Left ventricle myocardium inferior (tissue), 1 donor: ENCODE measurements at regions of chr6 and their contacts with region 1.

Region 1: DNA sequence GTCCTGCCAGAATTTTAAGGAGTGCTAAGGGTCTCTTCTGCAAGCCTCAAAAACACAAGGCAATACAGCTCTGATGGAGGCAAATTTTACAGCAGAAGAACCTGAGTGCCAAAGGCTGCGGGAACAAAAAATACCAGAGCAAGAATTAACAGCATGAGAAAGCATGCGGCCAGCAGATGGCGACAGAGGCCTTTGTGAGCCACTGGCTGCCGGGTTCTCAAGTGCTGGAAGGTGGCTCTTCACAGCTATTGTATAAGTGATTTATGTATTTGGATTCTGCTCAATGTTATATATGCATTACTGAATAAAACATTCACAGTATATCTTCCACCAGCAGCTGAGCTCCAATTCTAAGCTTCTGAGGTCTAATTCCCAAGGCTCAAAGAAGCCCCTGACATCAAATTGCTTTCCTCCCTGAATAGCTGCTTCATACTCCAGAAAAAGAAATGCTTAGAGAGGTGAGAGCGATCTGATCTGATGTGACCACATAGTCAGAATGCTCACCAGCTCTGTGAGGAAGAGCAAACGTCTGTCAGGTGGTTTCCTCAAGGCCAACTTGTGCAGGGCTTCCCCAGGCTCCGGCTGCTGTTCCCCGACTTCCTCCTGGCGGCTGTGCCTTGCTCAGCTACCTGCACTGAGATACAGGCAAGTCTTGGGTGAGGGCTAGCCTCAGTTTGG is 58.6 kb downstream of the PPP1R3G start:
- DNase-seq: peak; percentile 88
- H3K4me3 ChIP-seq: no peak overlapping the region
- H3K27ac ChIP-seq: no peak overlapping the region
- H3K4me1 ChIP-seq: peaks cover 4% of the 10 kb centered on the region
- H3K27me3 ChIP-seq: no peaks in the 10 kb centered on the region
- CTCF ChIP-seq: peak; percentile 94

Region 2: GRCh38 chr6:4901386-4902061 is 242.2 kb before region 1 on chr6:
- intact Hi-C with region 1: no loop called
- DNase-seq: no peak
- H3K4me3 ChIP-seq: no peak overlapping the region
- H3K27ac ChIP-seq: no peak overlapping the region
- H3K4me1 ChIP-seq: peaks cover 8% of the 10 kb centered on the region
- H3K27me3 ChIP-seq: no peaks in the 10 kb centered on the region
- CTCF ChIP-seq: no peak

Region 3: DNA sequence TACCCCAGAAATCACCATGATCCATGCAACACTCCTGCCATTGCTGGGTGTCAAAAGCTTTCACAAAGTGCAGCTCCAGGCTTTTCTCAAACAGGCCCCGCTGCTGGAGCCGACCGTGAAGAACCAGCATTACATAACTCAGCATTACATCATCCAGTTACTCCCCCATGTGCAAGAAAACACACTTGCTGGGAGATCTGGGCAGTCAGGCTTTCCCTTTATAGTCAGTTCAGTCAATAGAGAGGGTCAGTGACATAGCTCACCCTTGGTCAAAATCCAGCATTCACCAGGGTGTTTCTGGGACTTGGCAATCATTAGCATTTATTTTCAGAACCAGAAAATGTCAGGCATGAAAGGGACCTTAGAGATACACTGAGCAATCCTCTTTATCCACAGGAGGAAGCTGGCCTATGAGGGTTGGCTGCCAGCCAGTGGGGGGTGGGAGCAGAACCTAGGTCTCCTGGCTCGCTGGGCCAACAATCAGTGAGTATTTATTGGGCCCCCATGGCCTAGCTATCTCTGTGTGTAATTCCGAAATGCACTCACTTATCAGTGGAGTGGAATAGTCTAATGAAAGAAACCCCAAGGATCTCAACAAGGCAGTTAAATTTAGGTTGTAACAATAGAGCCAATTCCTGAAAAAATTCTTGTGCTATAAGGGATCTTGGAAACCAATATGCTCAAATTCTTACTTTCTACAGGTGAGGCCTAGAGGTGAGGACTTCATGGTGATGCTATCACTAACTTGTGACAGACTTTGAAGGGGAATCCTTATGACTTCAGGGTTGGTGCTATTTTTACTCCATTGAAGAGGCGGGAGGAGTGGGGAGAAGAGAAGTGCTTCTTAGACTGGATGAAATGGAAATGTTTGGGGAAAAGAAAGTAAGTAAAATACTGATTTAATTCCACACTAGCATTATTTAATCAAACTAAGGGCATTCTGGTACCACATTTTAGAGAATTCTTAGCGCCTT is 62.4 kb after region 1 on chr6:
- intact Hi-C with region 1: loop called (anchors 10 kb)
- DNase-seq: peak; percentile 67
- H3K4me3 ChIP-seq: peak overlapping the region; percentile 7
- H3K27ac ChIP-seq: peak overlapping the region; percentile 85
- H3K4me1 ChIP-seq: peaks cover 72% of the 10 kb centered on the region
- H3K27me3 ChIP-seq: no peaks in the 10 kb centered on the region
- CTCF ChIP-seq: no peak

Region 4: GRCh38 chr6:5343998-5344397 is 200.2 kb after region 1 on chr6:
- intact Hi-C with region 1: no loop called
- DNase-seq: no peak
- H3K4me3 ChIP-seq: no peak overlapping the region
- H3K27ac ChIP-seq: no peak overlapping the region
- H3K4me1 ChIP-seq: peaks cover 18% of the 10 kb centered on the region
- H3K27me3 ChIP-seq: no peaks in the 10 kb centered on the region
- CTCF ChIP-seq: no peak

Region 5: DNA sequence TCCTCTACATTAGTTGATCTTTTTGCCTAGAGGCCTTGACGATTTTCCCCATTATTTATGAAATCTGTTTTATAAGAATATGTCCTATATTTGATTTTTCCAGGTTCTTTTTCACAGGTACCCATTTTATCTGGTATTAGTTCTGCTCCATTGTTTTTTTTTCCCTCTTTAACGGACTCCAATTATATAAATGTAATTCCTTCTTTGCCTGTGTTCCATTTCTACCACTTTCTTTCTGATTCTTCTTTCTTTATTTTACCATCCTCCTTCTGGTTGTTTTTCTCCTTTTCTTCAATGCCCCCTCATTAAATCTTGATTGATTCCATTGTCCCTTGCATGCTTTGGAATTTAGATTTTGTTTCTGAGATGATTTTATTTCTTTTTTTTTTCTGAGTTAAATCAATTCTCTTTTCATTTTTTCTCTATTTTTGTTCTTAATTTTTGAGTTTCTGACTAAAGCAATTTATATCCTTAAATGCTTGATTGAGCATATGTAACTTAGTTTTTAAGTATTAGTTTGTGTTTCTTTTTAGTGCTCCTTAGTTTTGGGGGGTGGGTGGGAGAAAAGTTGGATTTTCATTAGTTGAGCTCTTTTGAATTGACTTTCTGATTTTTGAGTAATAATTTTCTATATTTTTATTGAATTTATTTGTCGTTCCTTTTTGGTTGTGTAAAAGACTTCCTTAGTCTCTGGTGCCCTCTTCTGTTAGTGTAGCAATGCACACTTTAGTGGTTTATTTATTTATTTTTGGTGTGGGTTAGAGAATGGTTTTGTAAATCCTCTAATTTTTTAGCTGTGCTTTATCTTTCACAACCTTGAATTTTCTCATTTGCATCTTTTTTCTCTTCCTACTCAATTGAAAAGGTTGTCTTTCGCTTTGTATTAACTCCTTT is 258.3 kb after region 1 on chr6:
- intact Hi-C with region 1: loop called (anchors 5 kb)
- DNase-seq: no peak
- H3K4me3 ChIP-seq: no peak overlapping the region
- H3K27ac ChIP-seq: no peak overlapping the region
- H3K4me1 ChIP-seq: peaks cover 10% of the 10 kb centered on the region
- H3K27me3 ChIP-seq: no peaks in the 10 kb centered on the region
- CTCF ChIP-seq: peak; percentile 66

Region 6: DNA sequence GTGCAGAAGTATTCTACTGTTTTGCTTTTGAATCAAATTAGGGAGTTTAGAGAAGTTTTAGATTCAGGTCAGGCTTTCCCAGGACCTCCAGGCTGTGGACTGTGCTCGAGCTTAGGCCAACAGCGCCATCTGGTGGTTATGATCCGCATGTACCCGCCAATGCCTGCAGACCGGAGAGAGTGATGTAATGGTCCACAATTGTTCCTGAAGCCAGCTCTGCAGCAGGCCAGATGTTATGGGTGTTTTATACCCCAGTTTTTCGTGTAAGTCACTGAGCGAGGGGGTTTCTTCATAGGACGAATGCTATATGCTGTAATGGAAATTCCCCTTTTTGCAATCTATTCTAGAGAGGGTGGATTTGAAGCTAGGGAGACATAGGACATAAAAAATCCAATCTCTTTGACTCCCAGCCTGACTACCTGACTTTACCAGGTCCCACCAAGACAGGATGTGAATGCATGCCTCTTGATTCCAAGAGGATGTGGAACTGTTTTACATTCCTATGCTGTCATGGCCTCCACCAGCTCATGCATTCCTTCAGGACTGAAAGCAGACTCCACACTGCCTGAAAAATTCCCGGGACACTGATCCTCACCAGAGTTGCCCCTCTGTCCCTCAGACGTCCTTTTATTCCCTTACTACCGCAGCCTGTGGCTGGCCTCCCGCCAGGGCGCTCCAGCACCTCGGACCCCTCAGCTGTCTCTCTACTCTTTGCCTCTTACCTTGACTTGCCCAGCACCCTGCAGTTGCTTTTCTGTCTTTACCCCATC is 1403.5 kb after region 1 on chr6:
- intact Hi-C with region 1: loop called (anchors 5 kb)
- DNase-seq: peak; percentile 86
- H3K4me3 ChIP-seq: peak overlapping the region; percentile 68
- H3K27ac ChIP-seq: peak overlapping the region; percentile 66
- H3K4me1 ChIP-seq: peaks cover 14% of the 10 kb centered on the region
- H3K27me3 ChIP-seq: peaks cover 20% of the 10 kb centered on the region
- CTCF ChIP-seq: peak; percentile 94